ENCODE measurements at regions of chr16 and their contacts with region 1.

Region 1: GRCh38 chr16:84308120-84308519 is 13.4 kb downstream of the WFDC1 start:
- DNase-seq: no peak
- H3K4me3 ChIP-seq: no peak overlapping the region
- H3K27ac ChIP-seq: no peak overlapping the region
- H3K4me1 ChIP-seq: no peaks in the 10 kb centered on the region
- H3K27me3 ChIP-seq: no peaks in the 10 kb centered on the region
- CTCF ChIP-seq: peak in 3 of 4 experiments; percentile 24 to 51 (median 43)
- POLR2A ChIP-seq: no peak

Region 2: DNA sequence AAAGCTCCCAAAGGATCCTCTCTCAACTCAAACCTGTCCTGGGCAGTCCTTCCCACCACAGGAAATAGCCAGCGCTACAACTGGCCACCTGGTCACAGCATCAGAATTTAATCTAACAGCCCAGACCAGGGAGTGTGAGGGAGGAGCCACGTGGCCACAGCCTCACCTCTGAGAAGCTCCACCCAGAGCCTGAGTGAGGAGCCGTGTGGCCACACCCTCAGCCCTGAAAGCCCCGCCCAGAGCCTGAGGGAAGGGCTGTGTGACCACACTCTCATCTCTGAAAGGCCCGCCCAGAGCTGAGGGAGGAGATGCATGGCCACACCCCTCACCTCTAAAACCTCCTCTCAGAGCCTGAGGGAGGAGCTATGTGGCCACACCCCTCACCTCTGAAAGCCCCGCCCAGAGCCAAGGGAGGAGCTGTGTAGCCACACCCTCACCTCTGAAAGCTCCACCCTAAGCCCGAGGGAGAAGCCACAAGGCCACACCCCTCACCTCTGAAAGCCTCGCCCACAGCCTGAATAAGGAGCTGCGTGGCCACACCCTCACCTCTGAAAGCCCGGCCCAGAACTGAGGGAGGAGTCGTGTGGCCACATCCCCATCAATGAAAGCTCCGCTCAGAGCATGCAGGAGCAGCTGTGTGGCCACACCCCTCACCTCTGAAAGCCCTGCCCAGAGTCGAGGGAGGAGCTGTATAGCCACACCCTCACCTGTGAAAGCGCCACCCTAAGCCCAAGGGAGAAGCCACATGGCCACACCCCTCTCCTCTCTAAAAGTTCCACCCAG is 294.1 kb before region 1 on chr16:
- intact Hi-C with region 1: no loop called
- DNase-seq: peak; percentile 14
- H3K4me3 ChIP-seq: no peak overlapping the region
- H3K27ac ChIP-seq: no peak overlapping the region
- H3K4me1 ChIP-seq: no peaks in the 10 kb centered on the region
- H3K27me3 ChIP-seq: no peaks in the 10 kb centered on the region
- CTCF ChIP-seq: no peak
- POLR2A ChIP-seq: no peak

Region 3: GRCh38 chr16:84239141-84239769 is 68.9 kb before region 1 on chr16:
- intact Hi-C with region 1: loop called (anchors 10 kb)
- DNase-seq: no peak
- H3K4me3 ChIP-seq: no peak overlapping the region
- H3K27ac ChIP-seq: no peak overlapping the region
- H3K4me1 ChIP-seq: no peaks in the 10 kb centered on the region
- H3K27me3 ChIP-seq: peaks cover 4% of the 10 kb centered on the region
- CTCF ChIP-seq: no peak
- POLR2A ChIP-seq: no peak

Region 4: DNA sequence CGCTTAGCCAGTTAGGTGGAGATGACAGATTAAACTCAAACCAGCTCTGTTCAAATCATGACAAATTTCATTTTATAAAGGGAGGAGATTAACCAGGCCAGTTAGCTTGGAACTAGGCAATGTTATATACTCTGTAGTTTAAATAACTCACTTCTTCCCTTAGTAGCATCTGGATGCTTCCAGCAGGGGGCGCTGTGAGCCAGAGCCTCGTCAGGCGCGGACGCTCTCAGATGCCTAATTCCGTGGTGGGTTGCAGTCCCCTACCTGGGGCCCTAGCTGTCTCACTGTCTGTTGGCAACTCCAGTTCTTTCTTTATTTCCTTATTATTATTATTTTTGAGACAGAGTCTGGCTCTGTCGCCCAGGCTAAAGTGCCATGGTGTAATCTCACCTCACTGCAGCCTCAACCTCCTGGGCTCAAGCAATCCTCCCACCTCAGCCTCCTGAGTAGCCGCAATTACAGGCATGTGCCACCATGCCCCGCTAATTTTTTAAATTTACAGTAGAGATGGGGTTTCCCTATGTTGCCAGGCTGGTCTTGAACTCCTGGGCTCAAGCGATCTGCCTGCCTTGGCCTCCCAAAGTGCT is 30.8 kb before region 1 on chr16:
- intact Hi-C with region 1: loop called (anchors 5 kb)
- DNase-seq: peak; percentile 67
- H3K4me3 ChIP-seq: no peak overlapping the region
- H3K27ac ChIP-seq: no peak overlapping the region
- H3K4me1 ChIP-seq: no peaks in the 10 kb centered on the region
- H3K27me3 ChIP-seq: no peaks in the 10 kb centered on the region
- CTCF ChIP-seq: peak; percentile 78 to 89 (median 84)
- POLR2A ChIP-seq: no peak

Region 5: GRCh38 chr16:84819644-84820324 is 511.7 kb after region 1 on chr16 and contains the start of gene CRISPLD2:
- intact Hi-C with region 1: loop called (anchors 10 kb)
- DNase-seq: peak; percentile 93
- H3K4me3 ChIP-seq: peak within 1 kb of the TSS; percentile 48 to 49
- H3K27ac ChIP-seq: peak within 1 kb of the TSS; percentile 85
- H3K4me1 ChIP-seq: peaks cover 3% of the 10 kb centered on the region
- H3K27me3 ChIP-seq: no peaks in the 10 kb centered on the region
- CTCF ChIP-seq: no peak
- POLR2A ChIP-seq: peak; percentile 91
- total RNA-seq, gene CRISPLD2: 186 to 226 TPM

Measured in prostate gland (tissue), 2 donors.